Dorsolateral prefrontal cortex (tissue), 120 donors: ENCODE measurements at regions of chr7 and their contacts with region 1.

Region 1: GRCh38 chr7:2451171-2452073 is 24.8 kb downstream of the GRIFIN start:
- DNase-seq: peak; percentile 61 to 88 (median 78)
- H3K4me3 ChIP-seq: peak overlapping the region; percentile 8 to 69 (median 48)
- H3K27ac ChIP-seq: peak overlapping the region in 26 of 59 donors; percentile 3 to 73 (median 36)
- H3K27me3 ChIP-seq: no peaks in the 10 kb centered on the region
- CTCF ChIP-seq: peak; percentile 51 to 94 (median 86)

Region 2: DNA sequence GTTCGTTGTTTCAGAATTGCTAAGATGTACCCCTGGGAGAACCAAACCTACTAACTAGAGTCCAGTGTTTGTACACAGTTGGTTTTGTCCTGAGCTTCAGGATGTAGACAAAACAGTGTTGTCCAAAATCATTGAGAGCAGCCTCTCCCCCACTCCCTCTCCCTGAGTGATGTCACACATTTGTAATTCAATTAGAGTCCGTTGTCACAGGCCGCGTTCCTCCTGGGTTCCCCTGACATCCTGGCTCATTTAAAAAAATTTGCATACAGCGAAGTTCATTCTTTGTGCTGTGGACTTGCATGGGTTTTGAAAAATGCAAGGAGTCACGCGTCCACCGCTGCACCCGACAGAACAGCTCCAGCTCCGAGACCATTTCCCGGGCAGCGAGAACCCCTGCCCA is 14.5 kb after region 1 on chr7:
- intact Hi-C with region 1: loop called in 1 of 2 experiments (anchors 2 kb)
- DNase-seq: peak in 1 of 10 donors; percentile 50
- H3K4me3 ChIP-seq: peak overlapping the region in 7 of 59 donors; percentile 9 to 35 (median 18)
- H3K27ac ChIP-seq: peak overlapping the region in 44 of 59 donors; percentile 3 to 79 (median 60)
- H3K27me3 ChIP-seq: no peaks in the 10 kb centered on the region
- CTCF ChIP-seq: peak in 1 of 56 donors; percentile 6

Region 3: DNA sequence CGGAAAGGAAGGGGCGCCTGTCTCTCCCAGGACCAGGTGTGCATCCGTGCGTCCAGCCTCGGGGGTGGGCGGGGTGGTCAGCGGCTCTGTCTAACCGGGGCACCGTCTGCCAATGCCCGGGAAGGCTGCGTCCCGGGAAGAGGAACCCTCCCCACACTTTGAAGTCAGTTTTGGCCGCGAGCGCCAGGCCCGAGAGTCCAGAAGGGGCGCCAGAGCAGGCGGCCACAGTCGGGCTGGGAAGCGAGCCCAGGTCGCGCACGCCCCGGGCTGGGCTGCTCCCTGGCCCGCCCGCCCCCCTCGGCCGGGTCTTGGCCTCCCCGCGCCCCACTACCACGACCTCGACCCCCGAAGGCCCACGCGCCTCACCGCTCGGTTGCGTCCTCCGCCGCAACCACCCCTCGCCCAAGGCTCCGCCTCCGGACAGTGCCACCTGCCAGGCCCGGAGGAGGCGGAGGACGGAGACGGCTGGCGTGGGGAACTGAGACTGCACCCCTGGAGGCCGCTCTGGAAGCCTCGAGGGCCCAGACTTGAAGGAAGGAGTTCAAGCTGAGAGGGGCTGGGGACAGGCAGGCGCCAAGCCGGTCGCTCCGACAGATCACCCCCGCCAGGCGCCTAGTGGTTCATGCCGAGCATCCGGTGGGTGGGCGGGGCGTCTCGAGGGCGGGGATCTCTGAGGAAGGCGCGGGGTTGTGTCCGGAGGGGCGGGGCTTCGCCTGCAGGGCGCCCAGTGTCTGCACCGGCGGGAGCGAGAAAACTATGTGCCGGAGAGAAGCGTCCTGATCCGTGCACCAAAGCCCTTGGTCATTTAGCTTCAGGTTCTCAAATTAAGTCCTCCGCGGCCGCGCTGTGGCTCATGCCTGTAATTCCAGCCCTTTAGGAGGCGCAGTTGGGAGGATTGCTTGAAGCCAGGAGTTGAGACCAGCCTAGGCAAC is 104.0 kb after region 1 on chr7 and contains the start of gene BRAT1:
- intact Hi-C with region 1: loop called (anchors 5 kb)
- DNase-seq: peak; percentile 92 to 98 (median 96)
- H3K4me3 ChIP-seq: peak within 1 kb of the TSS; percentile 67 to 96 (median 90)
- H3K27ac ChIP-seq: peak within 1 kb of the TSS; percentile 89 to 100 (median 99)
- H3K27me3 ChIP-seq: no peaks in the 10 kb centered on the region
- CTCF ChIP-seq: peak in 41 of 56 donors; percentile 4 to 63 (median 30)
- total RNA-seq, gene BRAT1: 16.7 to 38.4 (median 24.9) TPM

Region 4: DNA sequence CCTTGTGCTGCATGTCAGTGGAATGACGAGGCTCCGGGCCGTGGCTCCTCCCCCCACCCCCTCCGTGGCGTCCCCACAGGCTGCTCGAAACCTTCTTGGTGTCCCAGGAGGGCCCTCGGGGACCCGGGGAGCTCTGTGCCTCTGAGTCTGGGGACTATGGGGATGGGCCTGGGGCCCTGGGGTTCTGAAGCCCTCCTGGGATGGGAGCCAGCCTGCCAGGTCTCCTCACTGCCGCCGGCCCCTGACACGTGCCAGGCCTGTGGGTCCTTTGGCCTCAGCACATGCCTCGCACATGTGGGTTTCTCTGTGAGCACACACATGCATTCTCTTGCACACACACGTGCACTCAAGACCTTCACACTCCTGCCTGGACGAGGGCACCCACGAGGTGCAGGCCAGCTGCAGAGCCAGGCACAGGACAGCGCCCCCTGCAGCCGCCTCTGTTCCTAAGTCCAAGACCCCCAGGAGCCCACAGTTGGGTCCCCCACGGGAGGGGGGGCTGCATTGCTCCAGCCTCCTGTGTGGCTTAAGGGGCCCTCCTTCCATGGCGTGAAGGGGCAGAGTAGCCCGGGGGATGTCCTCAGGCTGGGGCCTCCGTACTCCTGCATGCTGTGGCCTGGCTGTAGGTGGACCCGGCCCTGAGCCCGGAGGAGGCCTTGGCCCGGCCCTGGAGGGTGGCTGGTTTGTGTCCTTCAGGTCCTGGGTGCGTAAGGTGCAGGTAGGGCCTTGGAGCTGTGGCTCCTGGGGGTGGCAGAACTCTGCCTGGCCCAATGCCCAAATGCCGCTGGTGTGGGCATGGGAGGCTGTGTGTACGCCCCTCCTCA is 209.4 kb after region 1 on chr7:
- intact Hi-C with region 1: loop called in 1 of 2 experiments (anchors 10 kb)
- DNase-seq: no peak
- H3K4me3 ChIP-seq: no peak overlapping the region
- H3K27ac ChIP-seq: peak overlapping the region in 4 of 59 donors; percentile 28 to 71 (median 38)
- H3K27me3 ChIP-seq: no peaks in the 10 kb centered on the region
- CTCF ChIP-seq: peak in 8 of 56 donors; percentile 11 to 35 (median 16)

Region 5: DNA sequence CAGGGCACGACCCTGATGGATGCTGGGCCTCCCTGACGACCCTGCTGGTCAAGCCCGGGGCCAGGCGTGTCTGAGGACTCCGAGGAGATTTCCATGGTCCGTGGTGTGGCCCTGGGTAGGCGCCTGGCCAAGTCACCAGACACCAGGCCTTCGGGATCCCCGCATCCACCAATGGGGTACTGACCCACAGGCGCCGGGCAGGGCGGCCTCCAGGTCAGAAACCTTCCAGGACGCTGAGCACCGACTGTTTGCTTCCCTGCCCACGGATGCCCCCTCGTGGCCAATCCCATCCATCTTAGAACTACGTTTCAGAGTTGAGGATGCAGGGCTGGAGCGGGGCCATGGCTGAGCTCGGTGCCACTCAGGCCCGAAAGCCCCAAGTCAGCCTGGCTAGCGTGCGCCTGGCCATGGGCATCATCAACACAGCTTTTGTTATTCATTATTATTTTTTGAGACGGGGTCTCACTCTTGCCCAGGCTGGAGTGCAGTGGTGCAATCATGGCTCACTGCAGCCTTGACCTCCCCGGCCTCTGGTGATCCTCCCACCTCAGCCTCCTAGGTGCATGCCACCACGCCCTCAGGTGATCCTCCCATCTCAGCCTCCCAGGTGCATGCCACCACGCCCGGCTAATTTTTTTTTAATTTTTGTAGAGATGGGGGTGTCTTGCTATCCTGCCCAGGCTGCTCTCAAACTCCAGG is 229.5 kb after region 1 on chr7:
- intact Hi-C with region 1: loop called in 1 of 2 experiments (anchors 5 kb)
- DNase-seq: peak; percentile 80 to 90 (median 88)
- H3K4me3 ChIP-seq: peak overlapping the region in 13 of 59 donors; percentile 3 to 57 (median 42)
- H3K27ac ChIP-seq: peak overlapping the region in 55 of 59 donors; percentile 44 to 95 (median 90)
- H3K27me3 ChIP-seq: peaks cover 0 to 2% (median 0%) of the 10 kb centered on the region in 45 donors
- CTCF ChIP-seq: peak; percentile 56 to 92 (median 82)